SK-N-SH (cell line): ENCODE measurements at regions of chr7 and their contacts with region 1.

Region 1: GRCh38 chr7:104983578-104984539 is 30.1 kb upstream of the KMT2E start:
- DNase-seq: peak; percentile 95
- H3K4me3 ChIP-seq: peak overlapping the region; percentile 67 to 93
- H3K27ac ChIP-seq: peak overlapping the region; percentile 98 to 100
- H3K4me1 ChIP-seq: peaks cover 47 to 50% of the 10 kb centered on the region in 2 experiments
- H3K27me3 ChIP-seq: no peaks in the 10 kb centered on the region
- CTCF ChIP-seq: peak; percentile 56
- EP300 ChIP-seq: peak in 1 of 2 experiments; percentile 55; a peak in 1 of 4 replicates
- RAD21 ChIP-seq: peak; percentile 32

Region 2: DNA sequence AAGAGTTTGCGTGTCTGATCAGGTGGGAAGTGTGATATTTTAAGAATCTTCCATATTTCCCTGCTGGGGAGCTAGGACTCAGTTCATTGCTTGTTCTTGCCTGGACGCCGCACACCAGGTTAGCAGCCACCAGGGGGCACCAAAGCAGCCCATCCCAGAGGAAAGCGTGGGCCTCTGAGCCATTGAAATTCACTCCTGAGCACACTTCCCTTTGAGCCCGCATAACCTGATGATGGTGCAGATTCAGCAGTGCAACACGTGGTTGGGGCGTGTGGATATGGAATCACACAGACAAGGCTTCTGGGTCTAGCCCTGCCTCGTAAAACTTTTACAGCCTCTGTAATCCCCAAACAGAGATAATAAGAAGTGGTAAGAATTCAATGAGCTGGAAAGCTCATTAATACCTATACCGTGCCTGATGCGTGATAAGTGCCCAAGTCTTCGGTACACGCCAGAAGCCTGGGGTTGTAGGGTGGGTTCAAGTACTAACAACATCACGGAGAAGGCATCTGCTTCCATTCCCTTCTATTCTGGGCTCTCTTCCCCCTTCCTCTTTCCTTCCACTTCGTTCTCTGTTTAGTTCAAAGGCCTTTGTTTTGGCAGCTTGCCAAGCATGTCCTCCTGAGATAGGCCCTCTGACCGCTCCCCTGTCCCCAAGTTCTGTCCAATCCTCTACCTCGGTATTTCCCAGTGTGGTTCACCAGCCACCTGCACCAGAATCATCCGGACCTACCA is 100.0 kb before region 1 on chr7:
- CTCF ChIA-PET with region 1: interaction called, 21 read pairs
- POLR2A ChIA-PET with region 1: no interaction called
- DNase-seq: peak; percentile 84
- H3K4me3 ChIP-seq: no peak overlapping the region
- H3K27ac ChIP-seq: no peak overlapping the region
- H3K4me1 ChIP-seq: no peaks in the 10 kb centered on the region; a peak in 1 of 4 replicates
- H3K27me3 ChIP-seq: peaks cover 26% of the 10 kb centered on the region; the same call in 1 of the 2 replicates
- CTCF ChIP-seq: peak; percentile 99
- EP300 ChIP-seq: no peak
- RAD21 ChIP-seq: peak; percentile 84

Region 3: GRCh38 chr7:104967595-104967994 is 16.3 kb before region 1 on chr7:
- CTCF ChIA-PET with region 1: interaction called, 38 read pairs
- POLR2A ChIA-PET with region 1: interaction called, 3 read pairs
- DNase-seq: no peak
- H3K4me3 ChIP-seq: no peak overlapping the region
- H3K27ac ChIP-seq: no peak overlapping the region
- H3K4me1 ChIP-seq: peaks cover 0 to 24% of the 10 kb centered on the region in 2 experiments; a peak in 3 of 4 replicates
- H3K27me3 ChIP-seq: no peaks in the 10 kb centered on the region
- CTCF ChIP-seq: no peak
- EP300 ChIP-seq: no peak; a peak in 1 of 4 replicates
- RAD21 ChIP-seq: no peak

Region 4: DNA sequence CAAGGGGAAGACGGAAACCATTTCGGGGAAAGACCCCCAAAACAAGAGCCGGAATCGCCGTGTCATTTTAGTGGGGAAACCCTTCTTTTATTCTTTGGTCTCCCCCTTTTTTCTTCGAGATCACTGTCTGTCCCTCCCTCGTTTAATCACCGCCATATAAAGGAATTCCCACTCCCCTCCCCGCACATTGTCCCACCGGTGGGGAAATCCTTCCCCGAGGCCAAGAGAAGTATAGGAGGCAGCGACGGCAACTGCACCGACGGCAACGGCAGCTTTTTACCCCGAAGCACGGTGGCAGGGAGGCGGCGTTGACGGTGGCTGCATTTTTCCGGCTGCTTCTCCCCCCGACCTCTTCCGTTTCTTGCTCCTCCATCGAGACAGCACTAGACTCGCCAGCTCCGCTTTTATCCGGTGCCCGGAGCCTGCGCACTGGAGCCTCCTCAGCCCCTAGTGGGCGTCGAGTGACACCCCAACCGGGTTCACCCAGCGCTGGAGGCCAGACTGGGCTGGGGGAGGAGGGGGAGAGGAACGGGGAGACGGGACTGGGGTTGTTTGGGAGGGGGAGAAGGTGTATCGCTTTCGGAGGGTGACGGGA is 29.5 kb after region 1 on chr7:
- CTCF ChIA-PET with region 1: interaction called, 70 read pairs
- POLR2A ChIA-PET with region 1: interaction called, 68 read pairs
- DNase-seq: peak; percentile 95
- H3K4me3 ChIP-seq: peak overlapping the region; percentile 79 to 100
- H3K27ac ChIP-seq: peak overlapping the region; percentile 99 to 100
- H3K4me1 ChIP-seq: peaks cover 23 to 37% of the 10 kb centered on the region in 2 experiments; a peak in 3 of 4 replicates
- H3K27me3 ChIP-seq: no peaks in the 10 kb centered on the region
- CTCF ChIP-seq: peak; percentile 66
- EP300 ChIP-seq: no peak
- RAD21 ChIP-seq: 0 out of 2 replicates have a peak, but pooled peaks have one; percentile 15

Region 5: DNA sequence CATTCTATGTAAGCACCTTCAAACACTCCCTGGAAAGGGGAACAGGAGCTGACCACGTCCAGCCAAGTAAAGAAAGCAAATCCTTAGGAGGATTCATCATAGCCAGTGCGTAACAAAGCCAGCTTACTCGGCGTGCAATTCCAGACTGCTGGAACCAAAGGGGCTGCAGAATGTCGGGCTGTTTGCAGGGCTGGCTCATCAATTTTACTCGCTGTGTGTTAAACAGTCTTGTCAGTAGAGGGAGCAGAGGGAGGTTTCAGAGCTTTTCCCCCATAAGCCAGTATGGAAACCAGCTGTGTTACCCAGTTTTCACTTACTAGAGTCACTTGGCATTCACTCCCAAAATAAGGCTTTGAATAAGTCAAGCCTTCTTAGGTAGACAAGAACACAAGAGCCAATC is 157.2 kb after region 1 on chr7:
- CTCF ChIA-PET with region 1: interaction called, 11 read pairs
- POLR2A ChIA-PET with region 1: no interaction called
- DNase-seq: peak; percentile 66
- H3K4me3 ChIP-seq: no peak overlapping the region
- H3K27ac ChIP-seq: no peak overlapping the region
- H3K4me1 ChIP-seq: no peaks in the 10 kb centered on the region
- H3K27me3 ChIP-seq: no peaks in the 10 kb centered on the region
- CTCF ChIP-seq: peak; percentile 65
- EP300 ChIP-seq: no peak
- RAD21 ChIP-seq: peak; percentile 71

Region 6: DNA sequence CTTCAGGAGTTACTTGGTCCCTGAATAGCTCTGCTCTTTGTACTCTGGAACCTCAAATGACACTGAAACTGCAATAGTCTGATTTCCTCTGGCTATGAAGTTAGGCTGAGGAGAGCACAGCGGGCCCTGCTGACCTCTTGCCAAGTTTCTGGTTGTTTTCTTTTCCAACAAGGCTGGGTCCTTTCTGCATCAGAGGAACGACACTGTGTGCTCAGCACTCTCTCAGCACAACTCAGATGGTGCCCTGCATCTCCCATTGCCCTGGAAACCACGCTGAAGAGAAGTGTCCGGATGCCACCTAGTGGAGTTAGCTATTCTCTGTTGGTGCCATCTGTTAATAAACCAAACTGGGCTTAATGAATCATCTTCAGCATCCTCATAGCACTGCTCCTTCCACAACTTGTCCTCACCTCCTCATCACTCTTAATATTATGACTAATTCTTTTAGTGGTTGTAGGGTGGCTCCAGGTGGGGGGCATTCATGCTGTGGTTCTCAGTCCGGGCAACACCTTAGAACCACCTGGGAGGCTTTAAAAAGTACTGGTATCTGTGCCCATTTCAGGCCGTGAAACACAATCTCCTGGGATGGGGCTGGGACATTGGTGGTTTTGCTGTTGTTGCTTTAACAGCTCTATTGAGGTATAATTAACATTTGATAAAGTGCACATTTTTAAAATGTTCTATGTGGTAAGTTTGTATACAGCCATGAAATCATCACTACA is 605.7 kb after region 1 on chr7:
- CTCF ChIA-PET with region 1: interaction called, 15 read pairs
- POLR2A ChIA-PET with region 1: no interaction called
- DNase-seq: peak; percentile 88
- H3K4me3 ChIP-seq: no peak overlapping the region
- H3K27ac ChIP-seq: no peak overlapping the region
- H3K4me1 ChIP-seq: peaks cover 0 to 6% of the 10 kb centered on the region in 2 experiments; a peak in 1 of 4 replicates
- H3K27me3 ChIP-seq: no peaks in the 10 kb centered on the region
- CTCF ChIP-seq: peak; percentile 95
- EP300 ChIP-seq: no peak
- RAD21 ChIP-seq: peak; percentile 99